Heart right ventricle (tissue), 16 donors: ENCODE measurements at regions of chr4 and their contacts with region 1.

Region 1: DNA sequence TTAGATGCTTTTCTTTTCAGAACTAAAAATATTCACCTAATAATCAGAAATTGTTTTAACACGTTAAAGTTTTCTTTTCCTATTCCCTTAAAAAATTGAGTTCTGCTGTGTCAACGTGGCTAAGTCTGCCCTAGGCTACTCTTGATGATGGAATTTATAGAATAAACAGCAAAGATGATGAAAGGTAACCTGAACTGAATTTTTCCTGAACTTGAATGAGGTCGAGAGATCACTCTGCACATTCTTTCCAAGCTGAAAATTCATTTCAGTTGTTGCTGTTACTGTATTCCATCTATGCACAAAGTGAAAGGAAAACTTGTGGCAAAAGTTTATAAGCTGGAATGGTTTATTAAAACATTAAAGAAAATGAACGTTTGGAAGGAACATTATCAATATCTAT is 245.9 kb upstream of the GIMD1 start:
- DNase-seq: no peak
- ATAC-seq: no peak
- H3K4me3 ChIP-seq: no peak overlapping the region
- H3K27ac ChIP-seq: no peak overlapping the region
- H3K4me1 ChIP-seq: no peaks in the 10 kb centered on the region
- H3K27me3 ChIP-seq: no peaks in the 10 kb centered on the region
- CTCF ChIP-seq: no peak

Region 2: GRCh38 chr4:105433421-105433820 is 1181.0 kb before region 1 on chr4:
- intact Hi-C with region 1: loop called in 1 of 10 experiments (anchors 5 kb)
- DNase-seq: no peak
- ATAC-seq: no peak
- H3K4me3 ChIP-seq: no peak overlapping the region
- H3K27ac ChIP-seq: no peak overlapping the region
- H3K4me1 ChIP-seq: no peaks in the 10 kb centered on the region
- H3K27me3 ChIP-seq: no peaks in the 10 kb centered on the region
- CTCF ChIP-seq: no peak

Region 3: DNA sequence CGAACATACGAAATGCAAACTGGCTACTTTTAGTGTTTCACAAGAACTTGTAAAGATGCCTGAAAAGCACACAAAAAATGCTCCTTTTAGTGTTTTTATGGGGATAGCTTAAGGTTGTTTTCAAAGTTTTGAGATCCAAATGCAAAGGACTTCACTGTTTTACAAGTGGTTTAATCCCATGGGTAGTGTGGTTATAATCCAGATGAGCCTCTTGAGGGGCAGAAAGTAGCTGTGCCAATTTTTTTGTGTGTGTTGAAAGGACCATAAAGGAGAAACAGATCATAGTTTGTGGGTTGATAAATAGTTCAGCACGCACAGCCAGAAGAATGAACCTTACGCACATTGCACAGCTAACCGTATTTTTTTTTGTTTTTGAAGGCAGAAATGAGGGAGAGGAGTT is 119.0 kb before region 1 on chr4:
- intact Hi-C with region 1: no loop called
- DNase-seq: no peak
- ATAC-seq: no peak
- H3K4me3 ChIP-seq: no peak overlapping the region
- H3K27ac ChIP-seq: no peak overlapping the region
- H3K4me1 ChIP-seq: no peaks in the 10 kb centered on the region
- H3K27me3 ChIP-seq: peaks cover 0 to under 1% (median 0%) of the 10 kb centered on the region in 7 donors
- CTCF ChIP-seq: no peak